GM12878 (cell line): ENCODE measurements at regions of chr1 and their contacts with region 1.

Region 1: GRCh38 chr1:197915862-197916499 is 1.2 kb upstream of the LHX9 start:
- DNase-seq: no peak
- ATAC-seq: no peak; the same call in 2 of the 3 replicates
- H3K4me3 ChIP-seq: no peak overlapping the region
- H3K27ac ChIP-seq: no peak overlapping the region
- H3K4me1 ChIP-seq: no peaks in the 10 kb centered on the region
- H3K27me3 ChIP-seq: peaks cover 32 to 57% of the 10 kb centered on the region in 2 experiments
- CTCF ChIP-seq: 0 out of 6 replicates have a peak, but pooled peaks of 2 of the 3 experiments have one; percentile 8 to 18
- EP300 ChIP-seq: no peak
- POLR2A ChIP-seq: no peak
- RAD21 ChIP-seq: no peak

Region 2: GRCh38 chr1:197614916-197615692 is 300.9 kb before region 1 on chr1:
- CTCF ChIA-PET with region 1: interaction called, 11 read pairs
- POLR2A ChIA-PET with region 1: no interaction called
- RAD21 ChIA-PET with region 1: no interaction called
- SMC1A ChIA-PET with region 1: no interaction called
- in situ Hi-C with region 1: no loop called
- intact Hi-C with region 1: no loop called
- DNase-seq: peak; percentile 5
- ATAC-seq: peak; percentile 87
- H3K4me3 ChIP-seq: no peak overlapping the region
- H3K27ac ChIP-seq: no peak overlapping the region
- H3K4me1 ChIP-seq: no peaks in the 10 kb centered on the region
- H3K27me3 ChIP-seq: no peaks in the 10 kb centered on the region
- CTCF ChIP-seq: peak; percentile 52 to 61 (median 56); a peak in 5 of 6 replicates
- EP300 ChIP-seq: no peak
- POLR2A ChIP-seq: no peak
- RAD21 ChIP-seq: peak; percentile 70

Region 3: DNA sequence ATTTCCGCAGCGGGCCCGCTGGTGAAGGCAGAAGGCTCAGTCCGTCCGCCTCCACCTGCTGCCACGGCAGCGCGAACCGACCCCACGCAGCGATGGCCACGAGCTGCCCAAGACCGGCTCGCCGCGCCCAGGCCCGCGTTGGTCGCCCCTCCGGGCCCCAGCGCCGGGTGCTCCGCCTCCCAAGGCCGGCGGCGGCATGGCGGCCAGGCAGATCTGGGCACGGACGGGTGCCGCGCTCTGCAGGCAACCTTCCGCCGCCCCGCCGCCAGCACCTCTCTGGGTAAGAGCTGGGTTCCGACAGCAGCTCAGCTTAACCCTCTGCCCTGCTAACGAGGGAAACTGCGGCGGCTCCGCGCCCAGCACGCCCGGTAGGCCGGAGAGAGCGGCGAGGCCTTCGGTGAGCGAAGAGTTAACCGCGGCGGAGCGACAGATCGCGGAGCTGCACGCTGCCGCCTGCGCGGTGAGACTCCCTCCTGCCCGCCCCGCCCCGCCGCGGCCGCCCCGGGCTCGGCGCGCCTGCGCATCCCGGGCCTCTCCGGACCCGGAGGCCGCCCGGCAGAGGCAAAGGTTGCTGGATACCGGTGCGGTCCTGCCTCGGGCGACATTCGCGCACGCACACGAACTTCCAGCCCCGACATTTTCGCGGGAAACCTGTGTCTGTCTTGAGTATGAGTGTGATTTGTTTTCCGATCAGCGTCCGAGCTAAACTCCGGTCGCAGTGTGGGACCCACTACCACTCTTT is 13.4 kb before region 1 on chr1 and contains the start of gene C1orf53:
- CTCF ChIA-PET with region 1: interaction called, 3 read pairs
- POLR2A ChIA-PET with region 1: no interaction called
- RAD21 ChIA-PET with region 1: no interaction called
- SMC1A ChIA-PET with region 1: no interaction called
- in situ Hi-C with region 1: no loop called
- intact Hi-C with region 1: loop called (anchors 1 kb)
- DNase-seq: peak; percentile 24
- ATAC-seq: peak; percentile 99
- H3K4me3 ChIP-seq: peak within 1 kb of the TSS; percentile 65
- H3K27ac ChIP-seq: peak within 1 kb of the TSS; percentile 60
- H3K4me1 ChIP-seq: no peaks in the 10 kb centered on the region
- H3K27me3 ChIP-seq: no peaks in the 10 kb centered on the region; a peak in 2 of 4 replicates
- CTCF ChIP-seq: no peak
- EP300 ChIP-seq: no peak
- POLR2A ChIP-seq: peak; percentile 90
- RAD21 ChIP-seq: no peak
- polyA plus RNA-seq, gene C1orf53: 0.39 to 0.42 TPM

Region 4: GRCh38 chr1:197984289-197984688 is 68.3 kb after region 1 on chr1:
- CTCF ChIA-PET with region 1: no interaction called
- POLR2A ChIA-PET with region 1: no interaction called
- RAD21 ChIA-PET with region 1: no interaction called
- SMC1A ChIA-PET with region 1: no interaction called
- in situ Hi-C with region 1: no loop called
- intact Hi-C with region 1: no loop called
- DNase-seq: no peak
- ATAC-seq: no peak
- H3K4me3 ChIP-seq: no peak overlapping the region
- H3K27ac ChIP-seq: no peak overlapping the region
- H3K4me1 ChIP-seq: no peaks in the 10 kb centered on the region
- H3K27me3 ChIP-seq: no peaks in the 10 kb centered on the region
- CTCF ChIP-seq: no peak
- EP300 ChIP-seq: no peak
- POLR2A ChIP-seq: no peak
- RAD21 ChIP-seq: no peak